Right ventricle myocardium inferior (tissue), 1 donor: ENCODE measurements at regions of chrX and their contacts with region 1.

Region 1: DNA sequence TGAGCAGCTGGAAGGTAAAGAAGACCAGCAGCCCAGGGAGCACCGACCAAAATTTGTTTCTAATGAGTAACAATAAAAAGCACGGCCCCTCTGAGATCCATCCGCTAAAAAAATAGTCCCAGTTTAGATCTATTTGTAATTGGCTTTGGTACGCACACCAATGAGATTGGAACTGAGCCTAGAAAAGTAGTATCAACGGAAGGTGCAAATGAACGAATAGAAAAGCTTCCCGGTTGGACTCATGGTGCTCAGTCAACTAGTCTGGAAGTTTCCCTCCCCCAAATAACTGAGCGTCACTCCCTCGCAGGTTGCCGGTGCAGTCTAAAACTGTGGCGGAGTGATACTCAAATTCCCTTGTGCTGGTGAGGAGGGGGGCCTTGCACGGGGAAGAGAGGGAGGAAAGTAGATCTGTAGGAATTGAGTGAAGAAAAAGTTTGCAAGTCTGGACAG is at the start of gene COL4A5:
- DNase-seq: peak; percentile 54
- ATAC-seq: peak; percentile 92
- total RNA-seq, gene COL4A5: 6.1 TPM

Region 2: GRCh38 chrX:108224727-108225621 is 214.5 kb before region 1 on chrX:
- intact Hi-C with region 1: loop called (anchors 10 kb)
- DNase-seq: no peak
- ATAC-seq: no peak

Region 3: DNA sequence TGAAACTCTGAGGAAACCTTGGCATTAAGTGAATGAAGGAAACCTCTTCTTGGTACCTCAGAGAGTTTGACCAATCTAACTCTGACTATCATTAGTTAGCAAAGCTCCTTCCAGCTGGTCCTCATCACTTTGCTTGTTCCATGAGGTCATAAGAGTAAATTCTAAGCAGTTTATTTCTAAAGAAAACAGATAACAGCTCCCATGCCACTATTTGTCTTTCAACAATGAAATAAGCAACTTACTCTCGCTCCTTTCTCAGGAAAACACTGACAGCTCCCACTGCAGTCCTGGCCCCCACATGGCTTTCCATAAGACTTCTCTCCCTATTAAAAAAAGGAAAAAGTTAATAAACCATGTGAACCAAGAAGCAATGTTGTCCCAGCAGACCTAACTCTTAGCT is 129.0 kb before region 1 on chrX:
- intact Hi-C with region 1: loop called (anchors 1 kb)
- DNase-seq: no peak
- ATAC-seq: no peak